ENCODE measurements at regions of chr6 and their contacts with region 1.

Region 1: GRCh38 chr6:24283043-24283985 is 74.5 kb downstream of the DCDC2 start:
- DNase-seq: peak; percentile 31 to 53 (median 39)
- H3K4me3 ChIP-seq: no peak overlapping the region
- H3K27ac ChIP-seq: no peak overlapping the region
- H3K4me1 ChIP-seq: no peaks in the 10 kb centered on the region
- H3K27me3 ChIP-seq: no peaks in the 10 kb centered on the region
- CTCF ChIP-seq: peak in 1 of 3 donors; percentile 30
- EP300 ChIP-seq: no peak
- POLR2A ChIP-seq: no peak

Region 2: DNA sequence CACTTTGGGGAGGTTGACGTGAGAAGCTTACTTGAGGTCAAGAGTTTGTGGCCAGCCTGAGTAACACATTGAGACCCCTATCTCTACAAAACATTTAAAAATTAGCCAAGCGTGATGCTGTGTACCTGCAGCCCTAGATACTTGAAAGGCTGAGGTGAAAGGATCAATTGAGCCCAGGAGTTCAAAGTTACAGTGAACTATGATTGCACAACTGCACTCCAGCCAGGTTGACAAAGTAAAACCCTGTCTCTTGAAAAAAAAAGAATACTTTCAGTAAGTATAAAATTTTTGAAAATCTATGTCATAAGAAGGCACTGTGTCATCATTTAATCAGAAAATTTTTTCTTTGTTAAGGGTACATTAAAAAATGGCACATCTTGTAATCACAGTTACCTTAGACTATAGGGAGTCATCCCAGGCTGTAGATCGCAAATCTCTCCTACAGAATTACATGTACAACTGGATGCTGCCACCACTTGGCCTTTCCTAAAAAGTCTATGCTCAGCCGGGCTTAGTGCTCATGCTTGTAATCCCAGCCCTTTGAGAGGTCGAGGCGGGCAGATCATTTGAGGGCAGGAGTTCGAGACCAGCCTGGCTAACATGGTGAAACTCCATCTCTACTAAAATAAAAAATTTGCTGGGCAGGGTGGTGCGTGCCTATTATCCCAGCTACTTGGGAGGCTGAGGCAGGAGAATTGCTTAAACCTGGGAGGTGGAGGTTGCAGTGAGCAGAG is 102.4 kb after region 1 on chr6:
- intact Hi-C with region 1: loop called in 1 of 4 experiments (anchors 5 kb)
- DNase-seq: no peak
- H3K4me3 ChIP-seq: no peak overlapping the region
- H3K27ac ChIP-seq: no peak overlapping the region
- H3K4me1 ChIP-seq: no peaks in the 10 kb centered on the region
- H3K27me3 ChIP-seq: no peaks in the 10 kb centered on the region
- CTCF ChIP-seq: no peak
- EP300 ChIP-seq: no peak
- POLR2A ChIP-seq: no peak